HepG2 (cell line): ENCODE measurements at regions of chr16 and their contacts with region 1.

Region 1: DNA sequence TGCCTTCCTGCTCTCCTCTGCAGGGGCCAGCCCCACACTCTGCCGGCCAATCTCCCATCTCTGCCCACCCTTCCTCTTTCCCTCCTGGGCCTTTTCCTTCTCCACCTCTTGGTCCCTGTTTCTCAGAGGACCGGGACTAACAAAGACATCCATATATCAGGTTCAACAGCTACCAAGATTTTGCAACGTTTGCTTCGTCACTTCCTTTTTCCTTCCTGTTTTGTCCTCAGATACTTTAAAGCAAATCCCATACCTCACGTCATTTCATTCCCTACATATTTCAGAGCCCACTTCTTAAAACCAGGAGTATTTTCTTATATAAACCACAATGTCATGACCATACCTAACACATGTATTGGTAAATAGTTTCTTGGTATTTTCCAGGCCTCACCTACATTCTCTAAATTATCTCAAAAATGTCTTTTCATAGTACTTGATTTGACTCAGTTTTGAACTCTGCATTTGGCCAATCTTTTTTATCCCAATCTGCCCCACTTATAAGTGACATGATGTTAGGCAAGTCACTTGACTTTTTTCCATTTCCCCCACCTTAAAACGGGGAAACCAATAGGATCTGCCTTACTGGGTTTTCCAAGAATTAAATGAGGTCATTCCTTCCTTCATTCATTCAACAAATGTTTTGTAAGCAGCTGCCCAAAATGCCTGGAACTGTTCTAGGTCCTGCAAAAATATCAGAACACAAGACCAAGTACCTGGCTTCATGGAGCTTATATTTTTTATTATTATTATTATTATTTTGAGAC is 7.2 kb upstream of the USP10 start:
- DNase-seq: peak; percentile 59
- ATAC-seq: peak; percentile 36
- H3K4me3 ChIP-seq: peak overlapping the region in 2 of 3 experiments; percentile 8 to 39; a peak in 3 of 6 replicates
- H3K27ac ChIP-seq: no peak overlapping the region
- H3K4me1 ChIP-seq: peaks cover 34% of the 10 kb centered on the region
- H3K27me3 ChIP-seq: no peaks in the 10 kb centered on the region
- CTCF ChIP-seq: no peak
- EP300 ChIP-seq: no peak
- POLR2A ChIP-seq: no peak
- RAD21 ChIP-seq: no peak

Region 2: GRCh38 chr16:84672276-84673202 is 20.1 kb before region 1 on chr16:
- CTCF ChIA-PET with region 1: no interaction called
- POLR2A ChIA-PET with region 1: no interaction called
- in situ Hi-C with region 1: no loop called
- intact Hi-C with region 1: no loop called
- DNase-seq: peak; percentile 58
- ATAC-seq: peak; percentile 82
- H3K4me3 ChIP-seq: 0 out of 6 replicates have a peak overlapping the region, but pooled peaks of 1 of the 3 experiments have one; percentile 29
- H3K27ac ChIP-seq: no peak overlapping the region
- H3K4me1 ChIP-seq: peaks cover 34% of the 10 kb centered on the region
- H3K27me3 ChIP-seq: 0 out of 5 replicates have a peak, but pooled peaks cover 0 to 21% of the 10 kb centered on the region in 2 experiments
- CTCF ChIP-seq: peak; percentile 95
- EP300 ChIP-seq: no peak
- POLR2A ChIP-seq: no peak
- RAD21 ChIP-seq: peak; percentile 86

Region 3: GRCh38 chr16:84714028-84714427 is 21.4 kb after region 1 on chr16:
- CTCF ChIA-PET with region 1: no interaction called
- POLR2A ChIA-PET with region 1: interaction called, 10 read pairs
- in situ Hi-C with region 1: no loop called
- intact Hi-C with region 1: no loop called
- DNase-seq: no peak
- ATAC-seq: peak; percentile 22
- H3K4me3 ChIP-seq: no peak overlapping the region
- H3K27ac ChIP-seq: peak overlapping the region; percentile 25
- H3K4me1 ChIP-seq: peaks cover 55% of the 10 kb centered on the region
- H3K27me3 ChIP-seq: no peaks in the 10 kb centered on the region
- CTCF ChIP-seq: no peak
- EP300 ChIP-seq: no peak
- POLR2A ChIP-seq: no peak
- RAD21 ChIP-seq: no peak